Colonic mucosa (tissue), 4 donors: ENCODE measurements at regions of chr10 and their contacts with region 1.

Region 1: GRCh38 chr10:120735773-120736371 is 115.3 kb upstream of the WDR11 start:
- DNase-seq: no peak
- H3K4me3 ChIP-seq: no peak overlapping the region
- H3K27ac ChIP-seq: no peak overlapping the region
- H3K4me1 ChIP-seq: no peaks in the 10 kb centered on the region
- H3K27me3 ChIP-seq: no peaks in the 10 kb centered on the region
- CTCF ChIP-seq: peak; percentile 70

Region 2: GRCh38 chr10:120423431-120424197 is 312.3 kb before region 1 on chr10:
- intact Hi-C with region 1: loop called (anchors 5 kb)
- DNase-seq: peak; percentile 35
- H3K4me3 ChIP-seq: no peak overlapping the region
- H3K27ac ChIP-seq: no peak overlapping the region
- H3K4me1 ChIP-seq: no peaks in the 10 kb centered on the region
- H3K27me3 ChIP-seq: no peaks in the 10 kb centered on the region
- CTCF ChIP-seq: peak; percentile 78